Heart right ventricle (tissue), 16 donors: ENCODE measurements at regions of chr7 and their contacts with region 1.

Region 1: GRCh38 chr7:11506417-11506816 is 325.6 kb downstream of the THSD7A start:
- DNase-seq: no peak
- ATAC-seq: no peak
- H3K4me3 ChIP-seq: no peak overlapping the region
- H3K27ac ChIP-seq: no peak overlapping the region
- H3K4me1 ChIP-seq: no peaks in the 10 kb centered on the region
- H3K27me3 ChIP-seq: no peaks in the 10 kb centered on the region
- CTCF ChIP-seq: no peak

Region 2: GRCh38 chr7:11458736-11459483 is 47.5 kb before region 1 on chr7:
- intact Hi-C with region 1: no loop called
- DNase-seq: no peak
- ATAC-seq: peak in 6 of 8 donors; percentile 46 to 93 (median 82)
- H3K4me3 ChIP-seq: no peak overlapping the region
- H3K27ac ChIP-seq: peak overlapping the region in 4 of 10 donors; percentile 27 to 57 (median 41)
- H3K4me1 ChIP-seq: peaks cover 0 to 19% (median 5%) of the 10 kb centered on the region in 9 donors
- H3K27me3 ChIP-seq: no peaks in the 10 kb centered on the region
- CTCF ChIP-seq: no peak

Region 3: GRCh38 chr7:11567571-11567970 is 61.2 kb after region 1 on chr7:
- intact Hi-C with region 1: loop called in 1 of 10 experiments (anchors 10 kb)
- DNase-seq: no peak
- ATAC-seq: no peak
- H3K4me3 ChIP-seq: no peak overlapping the region
- H3K27ac ChIP-seq: no peak overlapping the region
- H3K4me1 ChIP-seq: no peaks in the 10 kb centered on the region
- H3K27me3 ChIP-seq: no peaks in the 10 kb centered on the region
- CTCF ChIP-seq: no peak